Activated CD4-positive, alpha-beta memory T cell treated with anti-CD3 and anti-CD28 coated beads, Interleukin-2, amount 10 ng/mL, durations not matched to agents 7 days and 5 days (primary cell): ENCODE measurements at regions of chr16 and their contacts with region 1.

Region 1: DNA sequence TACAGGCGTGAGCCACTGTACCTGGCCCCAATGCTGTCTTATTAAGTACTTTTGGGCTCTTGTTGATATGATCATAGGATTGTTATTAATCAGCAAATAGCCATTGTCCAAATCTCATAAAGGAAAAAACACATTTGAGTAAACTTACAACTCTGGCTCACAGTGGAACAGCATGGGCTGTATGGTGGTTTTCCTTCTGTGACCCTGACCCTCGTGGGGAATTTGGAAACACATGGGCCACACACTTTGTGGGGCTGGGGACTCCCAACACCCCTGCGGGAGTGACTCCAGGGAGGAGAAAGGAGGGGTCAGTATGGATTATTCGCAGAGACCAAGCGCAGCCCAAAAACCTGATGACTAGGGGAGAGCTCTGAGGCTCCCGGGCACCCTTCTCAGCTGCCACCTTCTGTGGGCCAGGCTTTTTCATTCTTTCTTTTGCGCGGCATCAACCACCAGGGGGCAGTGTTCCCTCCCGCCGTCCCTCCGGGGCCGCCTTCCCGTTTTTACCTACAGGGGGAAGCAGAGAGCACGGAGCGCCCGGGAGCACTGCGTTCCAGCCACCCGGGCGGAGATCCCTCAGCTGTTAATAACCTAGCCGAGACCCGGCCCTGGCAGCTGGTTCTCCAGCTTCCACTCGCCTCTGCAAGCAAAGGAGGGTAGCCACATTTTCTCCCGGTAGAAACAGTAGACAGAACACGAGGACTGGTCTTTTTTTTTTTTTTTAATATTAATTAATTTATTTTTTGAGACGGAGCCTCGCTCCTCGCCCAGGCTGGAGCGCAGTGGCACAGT is 9.7 kb downstream of the TSNAXIP1 start:
- DNase-seq: peak; percentile 91
- H3K4me3 Mint-ChIP-seq: no peak overlapping the region
- H3K27ac Mint-ChIP-seq: no peak overlapping the region
- H3K4me1 Mint-ChIP-seq: peaks cover 6% of the 10 kb centered on the region
- H3K27me3 Mint-ChIP-seq: peaks cover 4% of the 10 kb centered on the region

Region 2: GRCh38 chr16:67598527-67598926 is 217.9 kb before region 1 on chr16:
- CTCF ChIA-PET with region 1: no interaction called
- POLR2A ChIA-PET with region 1: no interaction called
- DNase-seq: no peak
- H3K4me3 Mint-ChIP-seq: no peak overlapping the region
- H3K27ac Mint-ChIP-seq: no peak overlapping the region
- H3K4me1 Mint-ChIP-seq: peaks cover 32% of the 10 kb centered on the region
- H3K27me3 Mint-ChIP-seq: no peaks in the 10 kb centered on the region

Region 3: GRCh38 chr16:67613808-67614207 is 202.6 kb before region 1 on chr16:
- CTCF ChIA-PET with region 1: no interaction called
- POLR2A ChIA-PET with region 1: no interaction called
- DNase-seq: no peak
- H3K4me3 Mint-ChIP-seq: no peak overlapping the region
- H3K27ac Mint-ChIP-seq: no peak overlapping the region
- H3K4me1 Mint-ChIP-seq: peaks cover 3% of the 10 kb centered on the region
- H3K27me3 Mint-ChIP-seq: no peaks in the 10 kb centered on the region

Region 4: DNA sequence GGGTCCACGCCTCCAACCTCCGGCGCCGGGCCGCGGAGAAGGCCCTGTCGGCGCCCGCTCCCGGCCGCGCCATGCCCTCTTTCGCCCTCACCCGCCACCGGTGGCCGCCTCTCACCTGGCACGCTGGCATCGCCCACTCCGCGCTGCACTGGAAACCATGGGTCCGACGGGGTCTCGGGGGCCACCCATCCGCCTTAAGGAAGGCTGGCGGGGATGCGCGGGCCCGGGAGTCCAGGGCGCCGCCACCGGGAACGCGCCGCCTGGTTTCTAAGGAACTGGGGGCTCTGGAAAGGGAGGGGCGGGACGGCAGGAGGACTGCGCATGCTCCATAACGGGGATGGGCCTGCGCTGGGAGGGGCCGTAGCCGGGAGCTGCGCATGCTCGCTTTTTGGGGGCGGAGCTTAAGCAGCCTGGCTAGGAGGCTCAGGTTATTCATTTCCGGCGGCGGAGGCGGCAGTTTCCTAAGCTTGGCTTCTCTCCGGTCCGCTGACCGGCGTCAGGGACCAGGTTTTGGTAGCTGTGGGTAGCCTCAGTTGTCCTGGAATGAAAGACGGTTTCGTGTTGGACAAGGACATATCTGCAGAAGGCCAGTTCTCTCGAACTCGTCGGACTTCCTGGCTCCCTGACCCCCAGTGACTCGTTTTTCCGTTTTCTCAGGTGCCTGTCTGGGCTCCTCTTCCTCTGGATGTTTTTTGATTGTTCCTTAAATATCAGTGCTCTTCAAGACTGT is 97.2 kb before region 1 on chr16 and contains the start of gene GFOD2:
- CTCF ChIA-PET with region 1: interaction called, 14 read pairs
- POLR2A ChIA-PET with region 1: interaction called, 3 read pairs
- DNase-seq: peak; percentile 98
- H3K4me3 Mint-ChIP-seq: peak within 1 kb of the TSS; percentile 98
- H3K27ac Mint-ChIP-seq: peak within 1 kb of the TSS; percentile 96
- H3K4me1 Mint-ChIP-seq: peaks cover 44% of the 10 kb centered on the region
- H3K27me3 Mint-ChIP-seq: no peaks in the 10 kb centered on the region
- total RNA-seq, gene GFOD2: 13.0 to 14.9 TPM

Region 5: GRCh38 chr16:67833418-67834241 is 17.2 kb after region 1 on chr16:
- CTCF ChIA-PET with region 1: interaction called, 19 read pairs
- POLR2A ChIA-PET with region 1: interaction called, 7 read pairs
- DNase-seq: peak; percentile 96
- H3K4me3 Mint-ChIP-seq: peak overlapping the region; percentile 84
- H3K27ac Mint-ChIP-seq: peak overlapping the region; percentile 77
- H3K4me1 Mint-ChIP-seq: peaks cover 22% of the 10 kb centered on the region
- H3K27me3 Mint-ChIP-seq: no peaks in the 10 kb centered on the region

Region 6: GRCh38 chr16:67883872-67884261 is 67.4 kb after region 1 on chr16:
- CTCF ChIA-PET with region 1: interaction called, 12 read pairs
- POLR2A ChIA-PET with region 1: no interaction called
- DNase-seq: peak; percentile 71
- H3K4me3 Mint-ChIP-seq: no peak overlapping the region
- H3K27ac Mint-ChIP-seq: no peak overlapping the region
- H3K4me1 Mint-ChIP-seq: no peaks in the 10 kb centered on the region
- H3K27me3 Mint-ChIP-seq: no peaks in the 10 kb centered on the region

Region 7: DNA sequence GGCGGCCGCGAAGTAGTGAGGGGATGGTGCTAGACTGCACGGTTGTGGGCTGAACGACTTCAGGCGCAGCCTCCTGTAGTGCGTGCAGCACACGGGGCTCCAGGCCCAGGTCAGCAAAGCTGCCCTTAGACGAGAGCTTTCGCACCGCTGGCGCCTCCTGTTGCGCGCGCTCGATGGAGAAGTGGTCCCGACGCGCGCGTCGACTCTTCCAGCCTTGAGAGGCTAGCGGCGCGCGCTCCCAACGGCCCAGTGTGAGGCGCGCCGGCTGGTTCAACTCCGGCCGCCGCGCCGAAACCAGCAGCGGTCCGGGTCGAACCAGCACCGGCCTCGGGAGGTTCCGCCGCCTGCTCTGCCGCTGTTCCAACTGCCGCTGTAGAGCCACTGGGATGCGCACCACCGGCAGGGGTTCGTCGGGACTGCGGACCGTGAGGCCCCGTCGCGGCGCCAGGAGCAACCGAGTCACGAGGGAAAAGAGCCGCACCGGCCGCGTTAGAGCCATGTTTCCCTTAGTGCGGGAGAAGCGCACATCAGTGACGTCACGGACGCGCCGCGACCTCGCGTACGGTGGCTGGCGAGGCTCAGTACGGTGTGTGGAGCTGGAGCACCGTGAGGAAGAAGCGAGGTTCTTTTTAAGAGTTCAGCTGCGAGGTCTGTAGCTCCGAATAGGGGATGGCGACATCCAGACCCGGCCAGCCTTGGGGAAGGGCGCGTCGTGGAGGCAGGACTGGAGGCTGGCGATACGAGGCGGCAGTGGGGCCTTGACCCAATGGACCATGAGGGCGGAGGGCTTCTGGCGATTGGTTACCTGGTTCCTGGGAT is 206.5 kb after region 1 on chr16 and contains the starts of genes DDX28 and DUS2:
- CTCF ChIA-PET with region 1: interaction called, 10 read pairs
- POLR2A ChIA-PET with region 1: no interaction called
- DNase-seq: peak; percentile 95
- H3K4me3 Mint-ChIP-seq: peak within 1 kb of the TSS; percentile 96
- H3K27ac Mint-ChIP-seq: peak within 1 kb of the TSS; percentile 89
- H3K4me1 Mint-ChIP-seq: peaks cover 35% of the 10 kb centered on the region
- H3K27me3 Mint-ChIP-seq: no peaks in the 10 kb centered on the region
- total RNA-seq, gene DDX28: 11.6 to 12.3 TPM
- total RNA-seq, gene DUS2: 23.8 to 24.4 TPM